ENCODE measurements at regions of chr14 and their contacts with region 1.

Region 1: GRCh38 chr14:70073924-70074566 is 114.7 kb downstream of the SLC8A3 start:
- DNase-seq: peak; percentile 21 to 87
- H3K4me3 ChIP-seq: no peak overlapping the region
- H3K27ac ChIP-seq: no peak overlapping the region
- H3K4me1 ChIP-seq: peaks cover 0 to 6% (median 0%) of the 10 kb centered on the region in 4 experiments; a peak in 3 of 7 replicates
- H3K27me3 ChIP-seq: no peaks in the 10 kb centered on the region
- CTCF ChIP-seq: peak; percentile 93 to 97 (median 97)
- EP300 ChIP-seq: no peak
- POLR2A ChIP-seq: no peak
- RAD21 ChIP-seq: peak; percentile 83 to 92

Region 2: GRCh38 chr14:69818757-69819191 is 255.3 kb before region 1 on chr14:
- CTCF ChIA-PET with region 1: interaction called, 28 read pairs
- POLR2A ChIA-PET with region 1: interaction called, 3 read pairs
- DNase-seq: peak; percentile 51 to 79
- H3K4me3 ChIP-seq: no peak overlapping the region
- H3K27ac ChIP-seq: no peak overlapping the region
- H3K4me1 ChIP-seq: no peaks in the 10 kb centered on the region
- H3K27me3 ChIP-seq: no peaks in the 10 kb centered on the region
- CTCF ChIP-seq: peak; percentile 44 to 95 (median 81)
- EP300 ChIP-seq: peak in 1 of 2 experiments; percentile 48; a peak in 1 of 3 replicates
- POLR2A ChIP-seq: no peak
- RAD21 ChIP-seq: peak; percentile 98 to 99

Region 3: DNA sequence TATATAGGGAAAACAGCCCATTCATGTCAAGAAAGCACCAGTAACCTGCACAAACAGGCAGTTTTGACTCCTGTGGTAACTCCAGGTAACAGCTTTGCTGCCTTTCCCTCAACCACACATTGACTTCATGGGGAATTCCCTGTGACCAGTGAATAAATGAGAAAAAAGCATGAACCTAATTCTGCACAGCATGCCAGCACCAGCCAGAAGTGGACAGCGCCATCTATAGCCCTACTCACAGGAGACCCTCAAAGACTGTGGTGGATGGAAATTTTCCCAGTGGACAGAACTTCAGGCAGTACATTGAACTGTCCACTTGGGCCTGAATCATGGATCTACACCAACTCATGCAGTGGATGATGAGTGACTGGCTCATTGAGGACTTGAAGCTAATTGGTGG is 37.4 kb before region 1 on chr14:
- CTCF ChIA-PET with region 1: interaction called, 23 read pairs
- POLR2A ChIA-PET with region 1: no interaction called
- DNase-seq: no peak
- H3K4me3 ChIP-seq: no peak overlapping the region
- H3K27ac ChIP-seq: no peak overlapping the region
- H3K4me1 ChIP-seq: peaks cover 0 to 11% (median 7%) of the 10 kb centered on the region in 4 experiments; a peak in 6 of 7 replicates
- H3K27me3 ChIP-seq: no peaks in the 10 kb centered on the region
- CTCF ChIP-seq: peak; percentile 42 to 55 (median 53)
- EP300 ChIP-seq: no peak
- POLR2A ChIP-seq: no peak
- RAD21 ChIP-seq: peak; percentile 59 to 65

Region 4: DNA sequence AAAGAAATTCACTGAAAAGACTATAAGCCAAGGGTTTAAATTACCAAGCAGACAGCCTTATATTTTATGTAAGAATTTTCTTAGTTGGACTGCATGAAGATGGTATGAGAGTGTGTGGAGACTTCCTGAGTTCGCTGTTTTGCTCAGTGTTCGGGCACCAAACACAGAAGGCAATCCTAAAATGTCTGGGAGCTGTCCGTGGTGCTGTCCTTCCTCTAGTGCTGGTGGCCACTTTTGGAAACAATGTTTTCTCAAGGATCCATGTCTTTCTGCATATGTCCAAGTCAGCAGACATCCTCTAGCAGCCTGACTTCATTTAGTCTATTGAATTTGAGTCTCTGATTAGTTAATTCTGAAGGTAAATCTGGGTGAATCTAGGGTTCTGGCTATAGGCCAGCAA is 21.1 kb before region 1 on chr14:
- CTCF ChIA-PET with region 1: interaction called, 80 read pairs
- POLR2A ChIA-PET with region 1: no interaction called
- DNase-seq: peak in 1 of 2 experiments; percentile 72
- H3K4me3 ChIP-seq: no peak overlapping the region
- H3K27ac ChIP-seq: no peak overlapping the region
- H3K4me1 ChIP-seq: no peaks in the 10 kb centered on the region
- H3K27me3 ChIP-seq: no peaks in the 10 kb centered on the region
- CTCF ChIP-seq: no peak
- EP300 ChIP-seq: no peak
- POLR2A ChIP-seq: no peak
- RAD21 ChIP-seq: no peak

Region 5: GRCh38 chr14:70086685-70087379 is 12.8 kb after region 1 on chr14:
- CTCF ChIA-PET with region 1: interaction called, 36 read pairs
- POLR2A ChIA-PET with region 1: no interaction called
- DNase-seq: no peak
- H3K4me3 ChIP-seq: no peak overlapping the region
- H3K27ac ChIP-seq: no peak overlapping the region
- H3K4me1 ChIP-seq: no peaks in the 10 kb centered on the region
- H3K27me3 ChIP-seq: no peaks in the 10 kb centered on the region; a peak in 1 of 7 replicates
- CTCF ChIP-seq: peak; percentile 9 to 71 (median 70)
- EP300 ChIP-seq: no peak
- POLR2A ChIP-seq: no peak
- RAD21 ChIP-seq: peak; percentile 76 to 80

Region 6: GRCh38 chr14:70133461-70133860 is 59.4 kb after region 1 on chr14:
- CTCF ChIA-PET with region 1: no interaction called
- POLR2A ChIA-PET with region 1: no interaction called
- DNase-seq: no peak
- H3K4me3 ChIP-seq: no peak overlapping the region
- H3K27ac ChIP-seq: no peak overlapping the region
- H3K4me1 ChIP-seq: peaks cover 0 to 4% (median 0%) of the 10 kb centered on the region in 4 experiments; a peak in 1 of 7 replicates
- H3K27me3 ChIP-seq: no peaks in the 10 kb centered on the region
- CTCF ChIP-seq: no peak
- EP300 ChIP-seq: no peak
- POLR2A ChIP-seq: no peak
- RAD21 ChIP-seq: no peak

Measured in H1 (cell line).